MCF 10A (cell line): ENCODE measurements at regions of chr12 and their contacts with region 1.

Region 1: DNA sequence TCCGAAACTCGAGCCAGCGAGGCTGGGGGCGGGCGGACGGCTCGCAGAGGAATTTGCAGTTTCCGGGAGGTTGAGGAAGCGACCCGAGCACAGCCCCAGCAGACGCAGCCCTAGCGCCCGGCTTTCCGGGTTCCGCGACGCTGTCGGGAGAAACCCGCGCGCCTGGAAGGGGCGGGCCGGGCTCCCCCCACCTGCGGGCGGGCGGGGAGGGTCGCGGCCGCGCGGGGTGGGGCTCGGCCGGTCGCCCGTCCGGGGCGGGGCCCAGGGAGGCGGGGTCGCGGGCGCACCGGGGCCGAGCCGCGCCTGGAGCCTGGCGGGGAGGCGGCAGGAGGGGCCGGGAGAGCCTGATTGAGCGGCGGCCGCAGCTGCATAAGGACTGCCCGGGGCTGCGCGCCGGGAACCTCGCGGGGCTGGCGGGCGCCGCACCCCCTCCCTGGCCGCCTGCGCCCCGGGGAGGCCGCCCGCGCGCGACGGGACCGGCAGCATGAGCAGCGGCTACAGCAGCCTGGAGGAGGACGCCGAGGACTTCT is at the start of gene RASSF3:
- DNase-seq: peak; percentile 71
- H3K4me3 Mint-ChIP-seq: peak within 1 kb of the TSS; percentile 80
- H3K27ac Mint-ChIP-seq: peak within 1 kb of the TSS; percentile 90
- H3K4me1 Mint-ChIP-seq: peaks cover 14% of the 10 kb centered on the region
- H3K27me3 Mint-ChIP-seq: no peaks in the 10 kb centered on the region
- CTCF ChIP-seq: no peak
- total RNA-seq, gene RASSF3: 30.5 and 30.6 TPM in 2 replicates

Region 2: GRCh38 chr12:64560396-64561304 is 49.6 kb before region 1 on chr12:
- CTCF ChIA-PET with region 1: interaction called, 4 read pairs
- POLR2A ChIA-PET with region 1: interaction called, 12 read pairs
- intact Hi-C with region 1: loop called (anchors 2 kb)
- DNase-seq: peak; percentile 86
- H3K4me3 Mint-ChIP-seq: no peak overlapping the region
- H3K27ac Mint-ChIP-seq: peak overlapping the region; percentile 78
- H3K4me1 Mint-ChIP-seq: peaks cover 17% of the 10 kb centered on the region
- H3K27me3 Mint-ChIP-seq: no peaks in the 10 kb centered on the region
- CTCF ChIP-seq: no peak

Region 3: GRCh38 chr12:64625243-64626077 is 15.2 kb after region 1 on chr12:
- CTCF ChIA-PET with region 1: interaction called, 5 read pairs
- POLR2A ChIA-PET with region 1: interaction called, 115 read pairs
- intact Hi-C with region 1: loop called (anchors 1 kb)
- DNase-seq: peak; percentile 79
- H3K4me3 Mint-ChIP-seq: peak overlapping the region; percentile 73
- H3K27ac Mint-ChIP-seq: peak overlapping the region; percentile 94
- H3K4me1 Mint-ChIP-seq: peaks cover 26% of the 10 kb centered on the region
- H3K27me3 Mint-ChIP-seq: no peaks in the 10 kb centered on the region
- CTCF ChIP-seq: no peak

Region 4: GRCh38 chr12:64669270-64669842 is 59.1 kb after region 1 on chr12:
- CTCF ChIA-PET with region 1: interaction called, 4 read pairs
- POLR2A ChIA-PET with region 1: interaction called, 56 read pairs
- intact Hi-C with region 1: loop called (anchors 2 kb)
- DNase-seq: no peak
- H3K4me3 Mint-ChIP-seq: peak overlapping the region; percentile 42
- H3K27ac Mint-ChIP-seq: peak overlapping the region; percentile 67
- H3K4me1 Mint-ChIP-seq: peaks cover 61% of the 10 kb centered on the region
- H3K27me3 Mint-ChIP-seq: no peaks in the 10 kb centered on the region
- CTCF ChIP-seq: no peak

Region 5: DNA sequence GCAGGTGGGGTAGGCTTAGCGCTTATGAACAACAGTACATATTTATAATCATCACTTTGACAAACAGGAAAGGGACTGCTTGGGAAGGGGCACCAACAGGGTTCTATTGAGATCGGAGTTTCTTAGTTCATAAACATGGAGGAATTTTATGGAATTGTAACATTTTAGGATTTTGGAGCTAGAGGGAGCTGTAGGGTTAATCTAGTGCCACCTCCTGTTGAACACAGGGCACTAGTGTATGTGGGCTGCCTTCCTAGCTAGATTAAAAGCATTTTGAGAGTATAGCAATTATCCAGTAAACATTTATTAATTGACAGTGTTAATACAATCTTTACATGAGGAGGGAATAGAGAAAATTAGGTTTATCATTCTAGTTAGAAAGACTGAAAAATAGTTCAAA is 191.2 kb after region 1 on chr12:
- CTCF ChIA-PET with region 1: no interaction called
- POLR2A ChIA-PET with region 1: no interaction called
- intact Hi-C with region 1: no loop called
- DNase-seq: peak; percentile 45
- H3K4me3 Mint-ChIP-seq: no peak overlapping the region
- H3K27ac Mint-ChIP-seq: no peak overlapping the region
- H3K4me1 Mint-ChIP-seq: peaks cover 13% of the 10 kb centered on the region
- H3K27me3 Mint-ChIP-seq: no peaks in the 10 kb centered on the region
- CTCF ChIP-seq: no peak

Region 6: DNA sequence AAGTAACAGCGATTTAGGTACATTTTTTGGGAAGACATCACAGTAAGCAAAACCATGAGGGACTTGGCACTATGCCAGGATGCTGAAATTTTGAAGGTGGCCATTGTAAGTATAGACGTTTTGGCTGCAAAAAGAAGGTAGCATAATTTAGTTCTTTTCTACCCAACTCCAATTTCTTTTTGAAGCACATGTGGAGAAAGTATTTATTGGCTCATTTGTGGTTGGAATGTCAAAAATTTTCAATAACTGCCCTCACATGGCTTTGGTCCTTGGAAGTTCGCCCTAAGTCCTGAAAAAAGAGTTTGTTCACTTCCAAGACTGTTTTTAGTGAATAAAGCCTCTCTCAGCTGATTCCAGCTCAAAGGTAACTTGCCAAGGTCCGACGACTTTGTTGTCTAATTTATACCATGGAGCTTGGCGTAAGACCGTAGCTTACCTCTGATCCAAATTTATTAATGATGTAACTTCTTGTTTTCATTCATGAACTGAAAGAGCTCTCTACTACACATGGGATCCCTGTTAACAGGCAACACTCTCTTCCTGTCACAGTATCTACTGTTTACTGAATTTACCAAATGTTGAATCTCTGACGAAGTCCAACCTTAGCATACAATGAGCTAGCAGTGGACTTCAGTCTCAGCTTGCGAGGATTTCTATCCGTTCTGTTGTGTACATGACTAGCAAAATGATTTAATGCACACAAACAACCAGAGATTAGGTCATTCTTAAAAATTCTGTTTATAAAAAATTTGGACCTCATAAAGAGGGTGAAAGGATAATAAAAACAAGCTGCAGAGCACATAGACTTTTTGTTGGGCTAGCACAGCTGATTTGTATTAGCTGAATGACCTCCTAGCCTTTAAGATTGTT is 717.2 kb after region 1 on chr12:
- CTCF ChIA-PET with region 1: no interaction called
- POLR2A ChIA-PET with region 1: no interaction called
- intact Hi-C with region 1: no loop called
- DNase-seq: no peak
- H3K4me3 Mint-ChIP-seq: no peak overlapping the region
- H3K27ac Mint-ChIP-seq: no peak overlapping the region
- H3K4me1 Mint-ChIP-seq: no peaks in the 10 kb centered on the region
- H3K27me3 Mint-ChIP-seq: no peaks in the 10 kb centered on the region
- CTCF ChIP-seq: no peak